ENCODE measurements at regions of chr11 and their contacts with region 1.

Region 1: GRCh38 chr11:32635819-32636218 is 52.2 kb downstream of the EIF3M start:
- DNase-seq: no peak
- H3K4me3 ChIP-seq: no peak overlapping the region
- H3K27ac ChIP-seq: no peak overlapping the region
- H3K4me1 ChIP-seq: no peaks in the 10 kb centered on the region
- H3K27me3 ChIP-seq: peaks cover 50% of the 10 kb centered on the region
- CTCF ChIP-seq: no peak

Region 2: GRCh38 chr11:31001427-31001826 is 1634.4 kb before region 1 on chr11:
- CTCF ChIA-PET with region 1: no interaction called
- POLR2A ChIA-PET with region 1: no interaction called
- intact Hi-C with region 1: no loop called
- DNase-seq: no peak
- H3K4me3 ChIP-seq: no peak overlapping the region
- H3K27ac ChIP-seq: no peak overlapping the region
- H3K4me1 ChIP-seq: no peaks in the 10 kb centered on the region
- H3K27me3 ChIP-seq: peaks cover 39% of the 10 kb centered on the region
- CTCF ChIP-seq: no peak

Region 3: DNA sequence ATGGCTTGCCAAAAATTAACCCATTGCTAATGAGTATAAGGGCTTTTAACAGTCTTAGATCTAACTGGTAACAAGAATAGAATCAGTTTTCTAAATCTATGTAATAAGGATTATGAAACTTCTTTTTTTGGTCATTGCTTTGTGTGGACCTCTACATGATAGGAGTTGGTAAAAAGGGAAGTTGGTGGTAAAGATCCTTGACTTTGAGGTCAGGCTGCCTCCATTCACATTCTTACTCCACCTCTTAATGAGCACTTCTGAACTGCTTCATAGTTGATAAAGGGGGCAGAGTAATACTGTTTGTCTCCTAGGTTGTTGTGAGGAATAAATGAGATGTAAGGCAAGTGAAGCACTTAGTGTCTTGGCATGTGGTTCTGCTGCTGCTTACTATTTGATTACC is 41.5 kb before region 1 on chr11:
- CTCF ChIA-PET with region 1: interaction called, 13 read pairs
- POLR2A ChIA-PET with region 1: no interaction called
- intact Hi-C with region 1: no loop called
- DNase-seq: no peak
- H3K4me3 ChIP-seq: no peak overlapping the region
- H3K27ac ChIP-seq: no peak overlapping the region
- H3K4me1 ChIP-seq: peaks cover 7% of the 10 kb centered on the region
- H3K27me3 ChIP-seq: no peaks in the 10 kb centered on the region
- CTCF ChIP-seq: no peak